Left lung (tissue), 14 donors: ENCODE measurements at regions of chr3 and their contacts with region 1.

Region 1: GRCh38 chr3:113838631-113839209 is at the start of gene GRAMD1C:
- DNase-seq: peak; percentile 84 to 98 (median 92)
- ATAC-seq: peak; percentile 100
- H3K4me3 ChIP-seq: peak within 1 kb of the TSS; percentile 42 to 53
- H3K27ac ChIP-seq: peak within 1 kb of the TSS; percentile 33 to 39
- H3K4me1 ChIP-seq: peaks cover 0 to 6% of the 10 kb centered on the region in 2 donors
- H3K27me3 ChIP-seq: no peaks in the 10 kb centered on the region
- CTCF ChIP-seq: peak; percentile 78 to 84
- polyA plus RNA-seq, gene GRAMD1C: 3.1 to 6.9 (median 5.0) TPM

Region 2: DNA sequence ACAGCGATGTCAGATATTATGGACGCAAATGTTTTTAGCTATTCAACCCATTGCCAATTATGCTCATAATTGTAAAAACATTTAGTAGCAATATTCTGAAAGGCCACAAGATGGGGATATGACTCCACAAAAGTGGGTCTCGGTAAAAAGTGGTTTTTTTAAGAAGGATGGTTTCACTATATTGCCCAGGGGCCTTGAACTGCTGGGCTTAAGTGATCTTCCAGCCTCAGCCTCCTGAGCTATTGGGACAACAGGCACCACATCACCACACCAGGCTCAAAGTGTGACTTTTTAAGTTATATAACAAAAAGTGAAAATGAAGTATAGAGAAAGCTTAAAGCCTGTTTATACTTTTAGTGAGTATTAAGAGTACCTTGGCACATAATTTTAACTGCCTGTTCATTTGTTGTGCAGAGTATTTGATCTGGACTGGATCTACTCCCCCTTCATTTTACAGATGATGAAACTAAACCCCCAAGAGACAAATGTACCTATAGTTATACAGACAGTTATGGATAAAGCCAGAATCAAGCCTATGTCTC is 102.1 kb before region 1 on chr3:
- intact Hi-C with region 1: loop called in 1 of 2 experiments (anchors 10 kb)
- DNase-seq: peak in 2 of 4 donors; percentile 51 to 70
- ATAC-seq: peak; percentile 90
- H3K4me3 ChIP-seq: no peak overlapping the region
- H3K27ac ChIP-seq: no peak overlapping the region
- H3K4me1 ChIP-seq: peaks cover 0 to 33% of the 10 kb centered on the region in 2 donors
- H3K27me3 ChIP-seq: no peaks in the 10 kb centered on the region
- CTCF ChIP-seq: peak; percentile 45 to 46